ENCODE measurements at regions of chr11 and their contacts with region 1.

Region 1: DNA sequence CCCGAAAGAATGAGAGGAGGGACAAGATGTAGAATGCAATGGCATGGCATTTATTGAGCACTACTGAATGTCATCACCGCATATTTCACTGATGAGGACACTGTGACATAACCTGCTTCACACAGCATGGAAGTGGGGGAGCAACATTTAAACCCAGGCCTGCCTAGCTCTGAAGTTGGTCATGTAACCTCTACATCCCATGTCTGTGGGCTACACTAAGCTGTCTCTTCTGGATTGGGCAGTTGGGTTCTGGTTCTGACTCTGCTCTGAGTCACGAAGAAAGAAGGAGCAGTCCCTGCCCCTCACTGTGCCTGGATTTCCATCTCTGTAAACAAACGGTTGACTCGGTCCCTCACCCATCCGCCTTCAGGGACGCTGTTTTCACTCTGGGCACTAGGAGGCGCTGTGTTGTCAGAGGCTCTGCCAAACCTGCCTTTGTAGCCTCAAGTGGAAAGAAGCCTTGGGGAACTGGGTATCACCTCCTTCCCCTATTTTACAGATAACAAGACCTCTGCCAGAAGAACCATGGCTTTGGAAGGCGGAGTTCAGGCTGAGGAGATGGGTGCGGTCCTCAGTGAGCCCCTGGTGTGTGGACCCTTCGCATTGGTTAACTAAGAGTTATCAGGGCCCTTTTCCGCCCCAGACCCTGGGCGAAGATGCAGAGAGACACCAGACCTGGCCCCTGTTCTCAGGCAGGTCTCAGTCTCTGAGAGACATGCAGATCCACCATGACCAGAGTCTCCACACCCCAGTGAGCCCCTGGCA is 12.7 kb upstream of the ARHGEF17 start:
- DNase-seq: no peak
- H3K4me3 ChIP-seq: no peak overlapping the region
- CTCF ChIP-seq: peak; percentile 94

Region 2: DNA sequence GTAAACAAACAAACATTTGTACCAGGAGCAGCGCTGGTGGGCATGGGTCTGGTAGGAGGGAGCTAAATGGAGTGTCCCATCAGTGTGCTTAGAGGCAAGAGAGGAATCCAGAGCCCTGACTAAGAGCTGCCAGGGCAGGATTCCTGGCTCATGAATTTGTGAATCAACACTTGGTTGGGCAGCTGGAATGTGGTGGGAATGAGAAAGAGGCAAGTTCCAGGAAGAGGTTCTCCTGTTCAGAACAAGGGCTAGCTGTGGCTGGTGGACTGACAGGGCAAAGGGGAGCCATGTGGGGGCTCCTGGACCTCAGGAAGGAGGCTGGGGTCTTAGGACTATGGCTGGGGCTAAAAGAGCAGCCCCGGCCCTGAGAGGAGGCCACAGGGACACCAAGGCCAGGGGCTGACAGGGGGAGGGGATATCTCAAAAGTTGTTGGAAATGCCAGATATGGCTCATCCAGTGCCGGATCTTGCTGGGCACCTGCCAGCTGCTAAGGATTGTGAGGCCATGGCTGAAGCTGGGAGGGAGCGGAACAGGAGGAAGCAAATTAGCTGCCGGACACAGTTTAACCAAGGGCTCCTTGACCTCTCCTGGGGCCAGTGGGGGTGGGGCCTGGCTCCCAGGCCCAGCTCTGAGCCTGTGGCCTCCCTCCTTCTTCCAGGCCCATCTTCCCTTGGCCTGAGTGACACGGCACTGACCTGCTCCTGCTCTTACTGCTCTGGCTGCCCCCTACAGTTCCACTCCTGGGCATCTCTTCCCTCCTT is 37.9 kb before region 1 on chr11:
- CTCF ChIA-PET with region 1: interaction called, 11 read pairs
- POLR2A ChIA-PET with region 1: no interaction called
- DNase-seq: peak; percentile 93
- H3K4me3 ChIP-seq: peak overlapping the region; percentile 6; the same call in 1 of the 2 replicates
- CTCF ChIP-seq: no peak

Region 3: GRCh38 chr11:73271936-73272719 is 23.3 kb before region 1 on chr11 and contains the start of gene P2RY6:
- CTCF ChIA-PET with region 1: interaction called, 11 read pairs
- POLR2A ChIA-PET with region 1: no interaction called
- DNase-seq: peak; percentile 16
- H3K4me3 ChIP-seq: no peak within 1 kb of the TSS
- CTCF ChIP-seq: no peak

Region 4: GRCh38 chr11:73414977-73415651 is 119.7 kb after region 1 on chr11:
- CTCF ChIA-PET with region 1: no interaction called
- POLR2A ChIA-PET with region 1: no interaction called
- DNase-seq: peak; percentile 95
- H3K4me3 ChIP-seq: no peak overlapping the region
- CTCF ChIP-seq: no peak

Region 5: GRCh38 chr11:73439002-73439843 is 143.8 kb after region 1 on chr11:
- CTCF ChIA-PET with region 1: no interaction called
- POLR2A ChIA-PET with region 1: no interaction called
- DNase-seq: no peak
- H3K4me3 ChIP-seq: no peak overlapping the region
- CTCF ChIP-seq: no peak